ENCODE measurements at regions of chr10 and their contacts with region 1.

Region 1: GRCh38 chr10:100046021-100046486 is 35.6 kb downstream of the CPN1 start:
- DNase-seq: peak; percentile 92
- H3K4me3 ChIP-seq: no peak overlapping the region
- H3K27ac ChIP-seq: no peak overlapping the region
- H3K4me1 ChIP-seq: peaks cover 23% of the 10 kb centered on the region
- H3K27me3 ChIP-seq: no peaks in the 10 kb centered on the region

Region 2: GRCh38 chr10:99854860-99855259 is 191.2 kb before region 1 on chr10:
- in situ Hi-C with region 1: loop called (anchors 10 kb)
- DNase-seq: peak; percentile 88
- H3K4me3 ChIP-seq: no peak overlapping the region
- H3K27ac ChIP-seq: no peak overlapping the region
- H3K4me1 ChIP-seq: no peaks in the 10 kb centered on the region
- H3K27me3 ChIP-seq: no peaks in the 10 kb centered on the region

Measured in GM23248 (cell line).